Psoas muscle (tissue), 8 donors: ENCODE measurements at regions of chr13 and their contacts with region 1.

Region 1: GRCh38 chr13:76980075-76980718 is 11.7 kb upstream of the CLN5 start:
- DNase-seq: peak; percentile 79 to 89
- ATAC-seq: peak; percentile 82 to 98 (median 94)
- H3K4me3 ChIP-seq: peak overlapping the region; percentile 58
- H3K27ac ChIP-seq: no peak overlapping the region
- H3K4me1 ChIP-seq: peaks cover 4% of the 10 kb centered on the region
- H3K27me3 ChIP-seq: peaks cover 0 to 5% (median 0%) of the 10 kb centered on the region in 3 donors
- CTCF ChIP-seq: peak; percentile 94

Region 2: GRCh38 chr13:75687150-75687763 is 1292.9 kb before region 1 on chr13:
- intact Hi-C with region 1: loop called in 1 of 2 experiments (anchors 10 kb)
- DNase-seq: no peak
- ATAC-seq: peak in 1 of 4 donors; percentile 50
- H3K4me3 ChIP-seq: no peak overlapping the region
- H3K27ac ChIP-seq: no peak overlapping the region
- H3K4me1 ChIP-seq: no peaks in the 10 kb centered on the region
- H3K27me3 ChIP-seq: no peaks in the 10 kb centered on the region
- CTCF ChIP-seq: peak; percentile 58

Region 3: DNA sequence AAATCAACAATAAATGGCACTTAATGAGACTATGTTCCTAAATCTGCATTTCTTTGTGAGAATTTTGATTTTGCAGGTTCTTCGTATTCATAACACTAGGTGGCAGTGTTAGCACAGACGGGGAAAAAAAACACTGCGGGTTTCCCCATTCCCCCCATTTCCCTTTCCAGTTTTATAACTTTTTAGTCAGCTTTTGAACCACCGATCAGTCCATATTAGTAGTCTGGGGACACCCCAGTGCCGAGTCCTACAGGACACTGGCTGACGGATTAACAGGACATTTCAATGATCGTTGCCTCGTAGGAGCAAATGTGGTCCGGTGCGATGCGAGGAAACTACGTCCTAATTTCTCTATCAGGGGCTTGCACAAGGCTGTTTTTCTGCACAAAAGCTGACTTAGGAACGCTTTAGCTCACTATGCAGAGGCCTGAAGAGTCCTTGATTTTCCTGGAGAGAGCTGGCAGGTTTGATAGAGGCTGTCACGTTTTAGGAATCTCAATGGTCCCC is 1109.7 kb before region 1 on chr13:
- intact Hi-C with region 1: loop called in 1 of 2 experiments (anchors 5 kb)
- DNase-seq: no peak
- ATAC-seq: peak; percentile 18 to 56 (median 30)
- H3K4me3 ChIP-seq: peak overlapping the region; percentile 54
- H3K27ac ChIP-seq: no peak overlapping the region
- H3K4me1 ChIP-seq: no peaks in the 10 kb centered on the region
- H3K27me3 ChIP-seq: no peaks in the 10 kb centered on the region
- CTCF ChIP-seq: peak; percentile 72

Region 4: DNA sequence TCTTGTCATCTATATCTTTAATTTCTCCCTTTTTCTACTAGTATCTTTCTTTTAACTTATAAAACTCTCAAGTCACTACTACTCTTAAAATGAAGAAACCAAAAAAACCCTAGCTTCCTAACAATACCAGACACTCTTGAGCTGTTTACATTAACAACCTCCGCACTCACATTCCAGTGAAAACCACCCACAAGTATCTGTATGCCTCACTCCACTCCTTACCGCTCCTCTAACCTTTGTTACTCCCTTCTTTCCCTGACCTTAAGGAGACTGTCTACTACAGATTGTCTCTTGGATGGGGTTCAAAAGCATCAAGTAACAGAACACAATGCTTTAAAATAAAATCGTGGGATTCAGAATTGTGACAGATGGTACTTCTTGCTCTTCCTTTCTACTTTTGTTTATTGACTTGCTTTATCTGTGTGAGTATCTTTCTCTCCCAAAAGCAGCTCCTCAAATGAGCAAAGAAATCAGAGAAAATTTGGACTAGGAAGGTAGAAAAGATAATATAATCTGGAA is 156.8 kb after region 1 on chr13:
- intact Hi-C with region 1: no loop called
- DNase-seq: no peak
- ATAC-seq: no peak
- H3K4me3 ChIP-seq: no peak overlapping the region
- H3K27ac ChIP-seq: no peak overlapping the region
- H3K4me1 ChIP-seq: no peaks in the 10 kb centered on the region
- H3K27me3 ChIP-seq: no peaks in the 10 kb centered on the region
- CTCF ChIP-seq: no peak